ENCODE measurements at regions of chr5 and their contacts with region 1.

Region 1: GRCh38 chr5:91219803-91220371 is 163.2 kb downstream of the ARRDC3 start:
- DNase-seq: peak; percentile 64 to 68
- H3K4me3 ChIP-seq: no peak overlapping the region
- H3K4me3 Mint-ChIP-seq: no peak overlapping the region
- H3K27ac Mint-ChIP-seq: peak overlapping the region; percentile 75
- H3K4me1 ChIP-seq: peaks cover 43% of the 10 kb centered on the region
- H3K4me1 Mint-ChIP-seq: peaks cover 41% of the 10 kb centered on the region
- H3K27me3 ChIP-seq: no peaks in the 10 kb centered on the region
- H3K27me3 Mint-ChIP-seq: no peaks in the 10 kb centered on the region
- CTCF ChIP-seq: peak; percentile 60 to 62

Region 2: DNA sequence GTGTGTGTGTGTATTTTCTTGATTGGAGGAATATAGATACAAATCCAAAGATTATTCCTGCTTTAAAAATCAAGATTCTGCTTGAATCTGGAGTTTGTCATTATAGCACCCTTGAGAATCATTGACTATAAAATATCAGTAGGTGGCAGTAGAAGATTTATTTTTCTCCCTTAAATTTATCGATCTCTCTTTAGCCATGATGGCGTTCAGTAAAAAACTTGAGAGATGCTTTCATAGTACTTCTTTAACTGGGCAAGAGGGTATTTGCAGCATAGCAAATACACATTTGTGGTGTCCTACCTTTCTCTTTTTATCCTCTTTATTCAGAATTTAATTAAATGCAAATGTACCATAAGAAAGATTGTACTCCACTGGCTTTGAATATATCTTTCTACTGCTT is 353.6 kb before region 1 on chr5:
- CTCF ChIA-PET with region 1: interaction called, 7 read pairs
- POLR2A ChIA-PET with region 1: no interaction called
- intact Hi-C with region 1: loop called (anchors 2 kb)
- DNase-seq: no peak
- H3K4me3 ChIP-seq: no peak overlapping the region
- H3K4me3 Mint-ChIP-seq: no peak overlapping the region
- H3K27ac Mint-ChIP-seq: no peak overlapping the region
- H3K4me1 ChIP-seq: peaks cover 25% of the 10 kb centered on the region
- H3K4me1 Mint-ChIP-seq: peaks cover 14% of the 10 kb centered on the region
- H3K27me3 ChIP-seq: no peaks in the 10 kb centered on the region
- H3K27me3 Mint-ChIP-seq: no peaks in the 10 kb centered on the region
- CTCF ChIP-seq: peak; percentile 34 to 42

Region 3: DNA sequence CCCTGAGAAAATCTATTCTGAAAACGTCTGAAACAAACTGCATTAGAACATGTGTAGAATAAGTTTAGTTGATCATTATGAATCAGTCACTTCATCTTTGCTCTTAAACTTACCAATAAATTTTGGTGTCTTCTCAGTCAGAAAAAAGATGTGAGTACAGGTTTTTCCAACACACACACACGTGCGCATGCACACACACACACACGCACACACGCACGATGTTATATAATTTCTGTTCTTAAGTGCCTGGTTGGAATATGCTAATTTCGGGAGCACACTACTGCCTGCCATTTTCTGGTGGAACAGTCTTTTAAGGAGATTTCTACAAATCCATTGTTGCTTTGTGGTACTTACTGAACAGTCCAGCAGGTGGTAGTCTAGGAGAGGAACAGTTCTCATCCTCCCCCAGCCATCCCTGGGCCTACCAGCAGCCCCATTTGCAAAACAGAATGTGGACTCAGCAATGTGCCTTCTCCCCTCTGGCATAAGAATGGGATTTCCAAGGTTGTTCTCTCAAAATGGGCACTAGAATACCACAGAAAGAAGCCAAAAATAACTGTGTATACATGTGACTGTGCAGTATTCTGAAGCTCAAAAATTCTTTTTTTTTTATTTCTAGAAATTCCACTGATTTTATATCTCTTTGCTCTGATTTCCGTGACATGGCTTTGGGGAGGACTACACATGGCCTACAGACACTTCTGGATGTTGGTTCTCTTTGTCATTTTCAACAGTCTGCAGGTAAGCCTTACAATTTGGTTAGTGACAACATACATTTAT is 118.1 kb before region 1 on chr5:
- CTCF ChIA-PET with region 1: interaction called, 4 read pairs
- POLR2A ChIA-PET with region 1: no interaction called
- intact Hi-C with region 1: loop called (anchors 1 kb)
- DNase-seq: peak; percentile 78 to 81
- H3K4me3 ChIP-seq: no peak overlapping the region
- H3K4me3 Mint-ChIP-seq: peak overlapping the region; percentile 40
- H3K27ac Mint-ChIP-seq: no peak overlapping the region
- H3K4me1 ChIP-seq: no peaks in the 10 kb centered on the region
- H3K4me1 Mint-ChIP-seq: peaks cover 11% of the 10 kb centered on the region
- H3K27me3 ChIP-seq: no peaks in the 10 kb centered on the region
- H3K27me3 Mint-ChIP-seq: no peaks in the 10 kb centered on the region
- CTCF ChIP-seq: peak; percentile 81 to 84

Region 4: DNA sequence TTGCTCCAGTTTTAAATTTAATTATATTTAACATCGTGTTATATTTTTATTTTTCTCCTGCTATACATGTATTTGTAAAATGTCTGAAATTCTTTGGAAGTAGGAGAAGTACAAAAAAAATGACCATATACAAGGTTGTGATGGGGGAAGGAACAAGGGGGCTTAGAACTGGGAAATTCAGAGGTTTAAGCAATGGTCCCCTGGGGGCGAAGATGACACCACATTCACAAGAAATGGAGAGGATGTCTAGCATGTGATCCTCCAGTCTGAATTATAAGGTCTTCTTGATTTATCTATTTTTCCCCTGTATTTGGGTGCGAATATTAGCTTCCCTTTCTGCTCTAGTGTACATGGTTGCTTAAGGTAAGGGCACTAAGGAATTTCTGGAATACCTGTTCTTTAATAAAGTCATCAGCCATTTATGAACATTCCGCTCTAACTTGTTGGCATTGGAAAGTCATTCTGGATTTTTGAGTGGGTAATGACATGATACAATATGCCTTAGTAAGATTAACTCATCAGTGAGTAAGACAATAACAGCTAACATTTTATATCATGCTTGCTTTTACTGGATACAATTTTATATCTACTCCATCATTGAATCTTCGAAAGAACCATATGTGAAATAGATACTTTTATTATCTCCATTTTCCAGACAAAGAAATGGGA is 33.0 kb before region 1 on chr5:
- CTCF ChIA-PET with region 1: interaction called, 6 read pairs
- POLR2A ChIA-PET with region 1: interaction called, 4 read pairs
- intact Hi-C with region 1: loop called (anchors 1 kb)
- DNase-seq: no peak
- H3K4me3 ChIP-seq: no peak overlapping the region
- H3K4me3 Mint-ChIP-seq: peak overlapping the region; percentile 22
- H3K27ac Mint-ChIP-seq: peak overlapping the region; percentile 36
- H3K4me1 ChIP-seq: peaks cover 34% of the 10 kb centered on the region
- H3K4me1 Mint-ChIP-seq: peaks cover 39% of the 10 kb centered on the region
- H3K27me3 ChIP-seq: no peaks in the 10 kb centered on the region
- H3K27me3 Mint-ChIP-seq: no peaks in the 10 kb centered on the region
- CTCF ChIP-seq: no peak

Region 5: GRCh38 chr5:91206734-91207133 is 13.2 kb before region 1 on chr5:
- CTCF ChIA-PET with region 1: no interaction called
- POLR2A ChIA-PET with region 1: no interaction called
- intact Hi-C with region 1: no loop called
- DNase-seq: no peak
- H3K4me3 ChIP-seq: no peak overlapping the region
- H3K4me3 Mint-ChIP-seq: no peak overlapping the region
- H3K27ac Mint-ChIP-seq: no peak overlapping the region
- H3K4me1 ChIP-seq: peaks cover 7% of the 10 kb centered on the region
- H3K4me1 Mint-ChIP-seq: no peaks in the 10 kb centered on the region
- H3K27me3 ChIP-seq: no peaks in the 10 kb centered on the region
- H3K27me3 Mint-ChIP-seq: no peaks in the 10 kb centered on the region
- CTCF ChIP-seq: no peak

Region 6: GRCh38 chr5:91280362-91281269 is 60.7 kb after region 1 on chr5:
- CTCF ChIA-PET with region 1: interaction called, 4 read pairs
- POLR2A ChIA-PET with region 1: interaction called, 3 read pairs
- intact Hi-C with region 1: loop called (anchors 1 kb)
- DNase-seq: peak; percentile 89 to 91
- H3K4me3 ChIP-seq: peak overlapping the region; percentile 48
- H3K4me3 Mint-ChIP-seq: peak overlapping the region; percentile 88
- H3K27ac Mint-ChIP-seq: peak overlapping the region; percentile 79
- H3K4me1 ChIP-seq: peaks cover 13% of the 10 kb centered on the region; the same call in 1 of the 2 replicates
- H3K4me1 Mint-ChIP-seq: peaks cover 8% of the 10 kb centered on the region
- H3K27me3 ChIP-seq: no peaks in the 10 kb centered on the region
- H3K27me3 Mint-ChIP-seq: no peaks in the 10 kb centered on the region
- CTCF ChIP-seq: no peak

Region 7: GRCh38 chr5:91419571-91420537 is 200.0 kb after region 1 on chr5:
- CTCF ChIA-PET with region 1: interaction called, 11 read pairs
- POLR2A ChIA-PET with region 1: no interaction called
- intact Hi-C with region 1: no loop called
- DNase-seq: peak; percentile 43 to 54
- H3K4me3 ChIP-seq: no peak overlapping the region
- H3K4me3 Mint-ChIP-seq: no peak overlapping the region
- H3K27ac Mint-ChIP-seq: no peak overlapping the region
- H3K4me1 ChIP-seq: no peaks in the 10 kb centered on the region
- H3K4me1 Mint-ChIP-seq: peaks cover 7% of the 10 kb centered on the region
- H3K27me3 ChIP-seq: no peaks in the 10 kb centered on the region
- H3K27me3 Mint-ChIP-seq: no peaks in the 10 kb centered on the region
- CTCF ChIP-seq: peak; percentile 58 to 76